Tibial artery (tissue), 4 donors: ENCODE measurements at regions of chr2 and their contacts with region 1.

Region 1: DNA sequence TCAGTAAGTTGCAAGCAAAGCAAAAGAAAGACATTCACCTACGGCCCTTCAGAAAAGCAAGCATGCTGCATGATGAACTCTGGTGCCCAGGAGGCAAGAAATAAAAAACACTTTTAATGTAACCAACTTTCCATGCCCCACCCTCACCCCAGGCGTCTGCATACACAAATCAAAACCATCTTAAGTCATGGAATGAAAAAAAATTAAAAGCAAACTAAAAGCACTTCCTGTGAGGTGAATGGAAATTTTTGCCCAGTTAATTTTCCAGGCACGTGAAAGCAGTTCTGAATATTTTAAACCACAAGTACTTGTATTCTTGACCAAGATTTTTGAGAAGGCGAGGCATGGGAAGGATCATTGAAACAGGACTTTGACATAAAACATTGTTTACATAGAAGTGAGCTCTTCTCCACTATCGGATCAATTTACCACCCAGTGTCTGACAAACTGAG is 2.5 kb upstream of the ICOS start:
- DNase-seq: no peak
- H3K4me3 ChIP-seq: no peak overlapping the region
- H3K27ac ChIP-seq: no peak overlapping the region
- H3K4me1 ChIP-seq: peaks cover 0 to 29% (median 5%) of the 10 kb centered on the region in 4 donors
- H3K27me3 ChIP-seq: no peaks in the 10 kb centered on the region
- CTCF ChIP-seq: no peak

Region 2: DNA sequence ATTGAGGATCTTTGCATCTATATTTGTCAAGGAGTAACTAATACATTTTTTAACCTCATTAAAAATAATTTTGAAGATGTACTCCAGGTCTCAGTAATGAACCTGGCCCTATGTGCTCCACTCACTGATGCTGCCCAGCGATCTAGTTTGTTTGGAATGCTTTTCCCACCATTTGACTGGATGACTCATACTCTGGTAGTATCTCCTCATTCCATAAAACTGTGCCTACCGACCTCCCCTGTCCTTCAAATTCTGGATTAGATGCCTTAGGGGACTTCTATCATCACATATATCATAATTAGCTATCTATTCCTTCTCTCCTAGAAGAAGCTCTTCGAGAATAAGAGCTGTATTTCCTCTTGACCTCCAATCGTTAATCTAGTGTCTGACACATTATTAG is 1215.5 kb before region 1 on chr2:
- intact Hi-C with region 1: no loop called
- DNase-seq: no peak
- H3K4me3 ChIP-seq: no peak overlapping the region
- H3K27ac ChIP-seq: no peak overlapping the region
- H3K4me1 ChIP-seq: no peaks in the 10 kb centered on the region
- H3K27me3 ChIP-seq: no peaks in the 10 kb centered on the region
- CTCF ChIP-seq: no peak

Region 3: DNA sequence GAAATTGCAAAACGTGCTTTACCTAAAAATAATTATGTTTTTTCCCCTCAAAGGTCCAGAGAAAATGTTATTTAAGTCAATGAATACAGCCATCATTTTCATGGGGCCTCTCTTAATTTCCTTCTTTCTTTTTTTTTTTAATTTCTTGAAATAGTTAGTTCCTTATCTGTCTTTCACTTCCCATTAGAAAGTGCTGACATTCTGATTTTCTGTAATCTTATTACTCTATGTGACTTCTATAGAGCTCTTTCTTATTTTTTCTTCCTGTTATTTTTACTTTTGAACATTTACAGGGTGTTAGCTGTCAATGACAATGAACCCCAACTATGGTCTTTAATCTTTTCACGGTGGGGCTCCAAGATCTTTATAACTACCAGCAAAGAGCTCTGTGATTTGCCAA is 36.5 kb before region 1 on chr2:
- intact Hi-C with region 1: no loop called
- DNase-seq: no peak
- H3K4me3 ChIP-seq: no peak overlapping the region
- H3K27ac ChIP-seq: no peak overlapping the region
- H3K4me1 ChIP-seq: peaks cover 0 to 20% (median 11%) of the 10 kb centered on the region in 4 donors
- H3K27me3 ChIP-seq: no peaks in the 10 kb centered on the region
- CTCF ChIP-seq: no peak

Region 4: GRCh38 chr2:204024503-204024902 is 90.4 kb after region 1 on chr2:
- intact Hi-C with region 1: loop called (anchors 5 kb)
- DNase-seq: peak in 1 of 2 donors; percentile 27
- H3K4me3 ChIP-seq: no peak overlapping the region
- H3K27ac ChIP-seq: peak overlapping the region; percentile 14 to 38
- H3K4me1 ChIP-seq: peaks cover 0 to 26% (median 10%) of the 10 kb centered on the region in 4 donors
- H3K27me3 ChIP-seq: no peaks in the 10 kb centered on the region
- CTCF ChIP-seq: peak; percentile 73 to 78